Calu3 (cell line): ENCODE measurements at regions of chrX and their contacts with region 1.

Region 1: DNA sequence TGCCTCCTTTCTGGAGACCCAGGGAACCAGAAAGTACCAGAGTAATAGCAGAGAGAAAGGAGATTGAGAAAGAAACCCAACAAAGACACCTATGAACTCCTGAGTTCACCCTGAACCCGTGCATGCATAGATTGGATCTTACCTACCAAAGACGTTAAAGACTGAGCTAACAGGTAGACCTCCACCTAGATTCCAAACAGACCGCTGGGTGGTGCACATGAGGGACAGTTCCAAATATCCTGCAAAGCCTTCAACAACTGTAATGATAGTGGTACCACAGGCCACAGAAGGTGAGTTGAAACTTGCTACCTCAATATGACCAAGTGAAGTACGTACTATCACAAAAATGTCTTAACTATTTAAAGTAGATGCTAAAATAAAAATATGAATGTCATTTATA is 34.0 kb upstream of the NR0B1 start:
- DNase-seq: peak; percentile 31
- H3K4me3 Mint-ChIP-seq: no peak overlapping the region
- H3K27ac Mint-ChIP-seq: no peak overlapping the region
- H3K4me1 Mint-ChIP-seq: no peaks in the 10 kb centered on the region
- H3K27me3 Mint-ChIP-seq: no peaks in the 10 kb centered on the region
- CTCF ChIP-seq: no peak

Region 2: DNA sequence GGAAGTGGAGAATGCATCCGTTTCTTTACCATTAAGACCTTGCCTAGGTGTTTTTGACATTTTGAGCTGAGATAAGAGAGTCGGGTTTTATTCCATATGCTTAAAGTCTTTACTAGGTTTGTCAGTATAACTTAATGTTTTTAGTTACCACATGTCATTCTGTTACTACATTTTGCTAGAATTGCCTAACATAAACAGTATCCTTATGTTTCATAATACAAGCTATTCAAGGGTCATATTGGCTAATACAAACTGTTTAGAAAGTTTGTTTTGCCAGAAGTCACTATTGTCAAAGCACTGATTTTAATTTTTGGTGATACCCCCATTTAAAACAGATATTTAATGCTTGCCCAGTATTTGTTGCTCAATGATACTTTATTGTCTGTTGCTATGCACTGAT is 555.5 kb before region 1 on chrX:
- CTCF ChIA-PET with region 1: no interaction called
- intact Hi-C with region 1: no loop called
- DNase-seq: no peak
- H3K4me3 Mint-ChIP-seq: no peak overlapping the region
- H3K27ac Mint-ChIP-seq: no peak overlapping the region
- H3K4me1 Mint-ChIP-seq: no peaks in the 10 kb centered on the region
- H3K27me3 Mint-ChIP-seq: no peaks in the 10 kb centered on the region
- CTCF ChIP-seq: no peak

Region 3: GRCh38 chrX:30196322-30196721 is 146.9 kb before region 1 on chrX:
- CTCF ChIA-PET with region 1: no interaction called
- intact Hi-C with region 1: no loop called
- DNase-seq: no peak
- H3K4me3 Mint-ChIP-seq: no peak overlapping the region
- H3K27ac Mint-ChIP-seq: no peak overlapping the region
- H3K4me1 Mint-ChIP-seq: no peaks in the 10 kb centered on the region
- H3K27me3 Mint-ChIP-seq: no peaks in the 10 kb centered on the region
- CTCF ChIP-seq: no peak

Region 4: GRCh38 chrX:30215357-30215843 is 127.8 kb before region 1 on chrX and contains the start of gene MAGEB2:
- CTCF ChIA-PET with region 1: no interaction called
- intact Hi-C with region 1: no loop called
- DNase-seq: no peak
- H3K4me3 Mint-ChIP-seq: no peak within 1 kb of the TSS
- H3K27ac Mint-ChIP-seq: no peak within 1 kb of the TSS
- H3K4me1 Mint-ChIP-seq: no peaks in the 10 kb centered on the region
- H3K27me3 Mint-ChIP-seq: no peaks in the 10 kb centered on the region
- CTCF ChIP-seq: no peak
- total RNA-seq, gene MAGEB2: not detected in 2 replicates

Region 5: DNA sequence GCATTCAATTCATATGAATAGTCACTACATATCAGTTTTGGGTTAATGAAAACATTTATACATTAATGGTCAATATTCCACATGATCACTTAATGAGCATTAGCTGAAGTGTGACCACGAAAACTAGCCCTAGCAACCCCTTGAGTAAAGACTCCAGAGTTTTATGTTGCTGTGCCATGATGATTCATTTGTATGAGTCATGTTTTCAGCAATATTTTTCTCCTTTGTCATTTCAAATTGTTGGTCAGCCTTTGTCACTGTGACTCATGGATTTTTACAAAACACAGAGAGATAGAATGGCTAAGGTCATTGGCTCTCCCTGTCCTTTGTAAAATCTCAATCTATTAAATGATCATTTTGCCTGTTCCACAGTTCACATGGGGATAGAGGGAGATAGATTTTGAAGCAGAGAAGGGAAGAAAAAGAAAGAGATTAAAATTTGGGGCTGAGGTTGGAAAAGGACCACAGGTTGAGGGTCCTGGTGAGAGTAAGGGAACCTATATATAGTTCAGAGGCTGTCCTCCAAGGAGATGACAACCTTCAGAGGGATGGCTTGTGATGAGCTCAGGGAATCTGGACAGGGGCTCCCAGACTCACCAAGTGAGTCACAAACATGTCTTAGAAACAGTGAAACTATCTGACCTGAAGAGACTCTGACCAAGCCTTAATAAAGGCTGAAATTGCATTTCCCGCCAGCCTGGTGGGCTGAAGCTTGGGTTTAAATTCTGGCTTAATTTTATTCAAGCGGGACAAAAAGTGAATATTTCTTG is 59.6 kb before region 1 on chrX:
- CTCF ChIA-PET with region 1: no interaction called
- intact Hi-C with region 1: loop called (anchors 5 kb)
- DNase-seq: peak; percentile 28
- H3K4me3 Mint-ChIP-seq: peak overlapping the region; percentile 49
- H3K27ac Mint-ChIP-seq: peak overlapping the region; percentile 98
- H3K4me1 Mint-ChIP-seq: peaks cover 31% of the 10 kb centered on the region
- H3K27me3 Mint-ChIP-seq: no peaks in the 10 kb centered on the region
- CTCF ChIP-seq: no peak

Region 6: DNA sequence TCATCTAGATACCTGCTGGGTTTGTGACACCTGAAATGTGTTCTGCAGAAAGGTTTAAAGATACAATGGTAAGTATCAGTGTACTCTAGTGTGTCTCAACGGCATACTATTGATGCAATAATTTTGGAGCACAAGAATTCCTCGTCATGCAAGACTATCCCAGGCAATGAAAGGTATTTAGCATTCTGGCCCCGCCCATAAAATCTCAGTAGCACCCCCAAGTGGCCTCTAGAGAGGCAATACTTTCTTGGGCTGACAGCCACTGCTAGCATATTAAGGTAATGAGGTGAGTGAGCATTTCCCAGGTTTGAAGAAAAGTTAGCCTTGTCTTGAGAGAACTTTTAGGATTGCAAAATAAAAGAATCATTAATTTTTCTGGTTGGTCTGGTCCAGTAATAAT is 521.8 kb after region 1 on chrX:
- CTCF ChIA-PET with region 1: no interaction called
- intact Hi-C with region 1: no loop called
- DNase-seq: peak; percentile 38
- H3K4me3 Mint-ChIP-seq: no peak overlapping the region
- H3K27ac Mint-ChIP-seq: no peak overlapping the region
- H3K4me1 Mint-ChIP-seq: no peaks in the 10 kb centered on the region
- H3K27me3 Mint-ChIP-seq: no peaks in the 10 kb centered on the region
- CTCF ChIP-seq: no peak